Lower leg skin (tissue), 4 donors: ENCODE measurements at regions of chr2 and their contacts with region 1.

Region 1: DNA sequence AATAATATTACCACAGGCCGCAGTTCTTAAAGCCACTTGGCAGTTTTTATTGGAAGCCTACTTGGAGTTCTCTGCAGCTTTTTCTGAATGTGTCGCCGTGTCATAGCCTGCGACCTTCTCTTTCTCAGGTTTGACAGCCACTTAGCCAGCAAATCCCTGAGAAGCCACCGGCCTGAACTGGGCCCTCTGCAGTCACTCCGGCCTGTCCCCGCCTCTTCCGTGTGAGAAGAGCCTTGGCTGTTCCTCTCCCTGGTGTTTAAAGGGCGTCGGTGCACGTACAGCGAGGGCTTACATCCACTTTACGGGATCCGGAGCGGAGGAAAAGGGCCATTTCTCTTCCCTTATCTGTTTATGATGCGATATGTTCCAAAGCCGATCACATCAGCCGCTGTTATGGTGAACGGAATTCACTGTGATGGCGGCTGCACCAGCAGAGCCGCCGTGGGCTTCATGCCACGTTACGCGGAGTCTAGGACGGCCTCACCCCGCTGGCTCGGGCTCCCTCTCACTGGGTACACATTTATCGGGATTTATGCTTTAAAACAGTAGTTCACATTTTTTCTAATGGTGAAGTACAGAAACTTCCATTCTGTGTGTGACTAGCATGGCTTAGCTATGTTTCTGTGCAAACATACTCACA is 66.8 kb downstream of the GBX2 start:
- DNase-seq: no peak
- H3K4me3 ChIP-seq: no peak overlapping the region
- CTCF ChIP-seq: no peak
- POLR2A ChIP-seq: no peak

Region 2: DNA sequence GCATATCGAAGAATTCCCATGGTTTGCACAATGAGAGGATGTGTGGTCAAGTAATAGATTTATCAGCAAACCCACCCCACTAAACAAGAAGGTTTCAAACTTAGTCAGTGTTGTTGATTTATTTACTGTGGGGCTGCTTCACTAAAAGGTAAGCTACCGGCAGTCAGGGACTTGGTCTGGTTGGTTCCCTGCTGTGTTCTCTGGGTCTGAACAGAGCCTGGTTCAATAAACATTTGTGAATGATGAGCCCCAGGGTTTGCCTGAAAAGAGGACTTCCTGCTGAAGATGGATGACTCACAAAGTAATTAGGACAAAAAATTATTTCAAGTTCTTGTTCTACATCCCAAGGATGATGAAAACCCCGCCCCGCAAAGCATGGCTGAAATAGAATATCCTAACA is 1942.6 kb before region 1 on chr2:
- intact Hi-C with region 1: loop called (anchors 5 kb)
- DNase-seq: no peak
- H3K4me3 ChIP-seq: no peak overlapping the region
- CTCF ChIP-seq: no peak
- POLR2A ChIP-seq: no peak

Region 3: DNA sequence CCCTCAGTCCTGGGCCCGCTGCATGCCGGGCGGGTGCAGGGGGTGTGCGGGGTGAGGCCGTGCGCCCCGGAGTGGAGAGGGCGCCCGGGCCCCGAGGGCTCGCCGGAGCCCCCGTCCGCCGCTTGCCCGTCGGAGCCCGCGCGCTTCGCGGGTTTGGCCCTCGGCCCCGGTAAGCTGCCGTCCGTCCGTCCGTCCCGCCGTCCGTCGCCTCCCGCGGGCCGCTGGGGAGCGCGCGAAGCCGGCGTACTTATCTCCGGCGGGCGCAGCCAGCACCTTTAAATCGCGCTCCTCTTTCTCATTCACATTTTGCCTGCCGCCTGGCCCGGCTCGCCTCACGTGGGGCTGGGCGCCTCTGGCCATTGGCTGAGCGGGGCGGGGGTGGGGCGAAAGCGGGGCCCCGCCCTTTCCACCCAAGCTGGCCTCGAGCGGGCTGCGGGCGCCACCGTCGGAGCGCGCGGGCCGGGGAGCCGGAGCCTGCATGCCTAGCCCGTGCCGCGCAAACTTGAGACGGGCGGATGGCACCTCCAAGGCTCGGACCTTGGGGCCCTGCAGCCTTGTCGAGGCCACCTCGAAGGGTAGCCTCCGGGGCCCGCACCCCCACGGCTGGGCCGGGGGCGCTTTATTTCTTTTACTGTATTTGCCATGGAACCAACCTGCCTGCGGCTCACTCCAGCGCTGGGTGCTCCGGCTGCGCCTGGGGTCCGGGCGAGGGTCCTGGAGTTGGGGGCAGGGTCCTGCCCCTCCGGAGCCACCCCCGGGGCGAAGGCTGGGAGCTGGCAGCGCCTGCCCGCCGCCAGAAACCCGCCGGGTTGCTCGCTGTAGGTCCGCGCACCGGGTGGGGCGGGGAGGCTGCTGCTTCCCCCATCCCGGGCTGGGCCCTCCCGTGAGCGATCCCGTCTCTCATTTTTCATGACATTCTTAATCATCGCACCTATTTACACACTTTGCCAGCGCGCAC is 67.0 kb after region 1 on chr2 and contains the start of gene GBX2:
- intact Hi-C with region 1: no loop called
- DNase-seq: peak in 1 of 2 donors; percentile 86
- H3K4me3 ChIP-seq: no peak within 1 kb of the TSS
- CTCF ChIP-seq: no peak
- POLR2A ChIP-seq: no peak
- total RNA-seq, gene GBX2: 0.13 TPM in 1 of 4 donors, not detected in the others